T-cell (primary cell): ENCODE measurements at regions of chr19 and their contacts with region 1.

Region 1: DNA sequence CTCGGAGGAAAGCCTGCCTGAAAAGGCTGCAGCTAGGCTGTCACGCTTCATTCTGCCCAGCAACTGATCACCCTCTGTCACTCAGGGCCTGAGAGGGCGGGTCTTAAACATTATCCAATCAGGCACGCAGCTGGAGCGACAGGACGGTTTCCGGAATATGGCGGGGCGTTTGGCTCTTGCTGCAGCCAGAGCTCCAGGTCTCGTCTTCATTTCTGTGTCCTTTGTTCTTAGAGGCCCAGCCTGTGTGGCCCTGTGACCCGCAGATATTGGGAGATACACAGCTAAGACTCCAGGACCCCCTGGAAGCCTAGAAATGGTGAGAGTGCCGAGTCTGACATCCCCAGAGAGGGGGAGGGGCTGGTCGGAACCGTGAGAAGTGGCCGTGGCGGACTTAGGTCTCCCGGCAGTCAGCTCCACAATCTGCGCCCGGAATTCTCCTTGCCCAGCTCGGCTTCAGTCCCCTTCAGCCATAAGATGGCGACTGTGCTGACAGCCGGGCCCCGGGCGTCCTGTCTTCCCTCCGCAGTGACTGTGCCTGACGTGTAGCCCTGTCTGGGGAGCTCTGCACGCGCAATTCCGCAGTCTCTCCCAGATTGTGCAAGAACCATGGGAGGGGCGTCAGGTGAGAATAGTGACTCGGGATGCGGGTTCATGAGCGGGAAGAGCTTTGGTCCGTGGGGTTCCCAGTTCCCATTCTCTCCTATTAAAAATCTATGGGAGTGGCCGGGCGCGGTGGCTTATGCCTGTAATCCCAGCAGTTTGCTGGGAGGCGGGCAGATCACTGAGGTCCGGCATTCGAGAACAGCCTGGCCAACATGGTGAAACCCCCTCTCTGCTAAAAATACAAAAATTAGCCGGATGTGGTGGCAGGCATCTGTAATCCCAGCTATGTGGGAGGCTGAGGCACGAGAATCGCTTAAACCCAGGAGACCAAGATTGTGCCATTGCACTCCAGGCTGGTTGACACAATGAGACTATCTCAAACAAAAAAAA is at the start of gene ZNF429:
- DNase-seq: peak; percentile 82 to 95 (median 91)
- ATAC-seq: peak; percentile 99 to 100 (median 100)
- H3K4me3 ChIP-seq: peak within 1 kb of the TSS; percentile 78 to 100
- H3K4me3 Mint-ChIP-seq: peak within 1 kb of the TSS; percentile 100
- H3K27ac ChIP-seq: peak within 1 kb of the TSS; percentile 90
- H3K27ac Mint-ChIP-seq: peak within 1 kb of the TSS; percentile 99
- H3K4me1 ChIP-seq: peaks cover 9 to 32% of the 10 kb centered on the region in 2 experiments
- H3K4me1 Mint-ChIP-seq: peaks cover 44 to 49% (median 48%) of the 10 kb centered on the region in 3 donors
- H3K27me3 ChIP-seq: no peaks in the 10 kb centered on the region
- H3K27me3 Mint-ChIP-seq: no peaks in the 10 kb centered on the region
- total RNA-seq, gene ZNF429: 14.6 to 26.8 (median 24.3) TPM

Region 2: GRCh38 chr19:19531951-19532805 is 1973.6 kb before region 1 on chr19:
- CTCF ChIA-PET with region 1: no interaction called
- POLR2A ChIA-PET with region 1: interaction called in 1 of 2 experiments, 11 read pairs
- DNase-seq: peak; percentile 52 to 92 (median 81)
- ATAC-seq: peak; percentile 83 to 87 (median 86)
- H3K4me3 ChIP-seq: no peak overlapping the region
- H3K4me3 Mint-ChIP-seq: no peak overlapping the region
- H3K27ac ChIP-seq: no peak overlapping the region
- H3K27ac Mint-ChIP-seq: peak overlapping the region; percentile 71 to 84
- H3K4me1 ChIP-seq: peaks cover 0 to 15% of the 10 kb centered on the region in 2 experiments
- H3K4me1 Mint-ChIP-seq: peaks cover 9 to 25% (median 12%) of the 10 kb centered on the region in 3 donors
- H3K27me3 ChIP-seq: no peaks in the 10 kb centered on the region
- H3K27me3 Mint-ChIP-seq: peaks cover 0 to 2% of the 10 kb centered on the region in 2 donors

Region 3: GRCh38 chr19:21474671-21475181 is 31.0 kb before region 1 on chr19:
- CTCF ChIA-PET with region 1: no interaction called
- POLR2A ChIA-PET with region 1: interaction called in 1 of 2 experiments, 13 read pairs
- DNase-seq: peak; percentile 16 to 85 (median 61)
- ATAC-seq: peak; percentile 93 to 100 (median 96)
- H3K4me3 ChIP-seq: peak overlapping the region; percentile 8 to 76
- H3K4me3 Mint-ChIP-seq: peak overlapping the region; percentile 34 to 73 (median 62)
- H3K27ac ChIP-seq: no peak overlapping the region
- H3K27ac Mint-ChIP-seq: no peak overlapping the region
- H3K4me1 ChIP-seq: peaks cover 0 to 14% of the 10 kb centered on the region in 2 experiments
- H3K4me1 Mint-ChIP-seq: peaks cover 0 to 5% (median 5%) of the 10 kb centered on the region in 3 donors
- H3K27me3 ChIP-seq: peaks cover 0 to 19% of the 10 kb centered on the region in 2 experiments
- H3K27me3 Mint-ChIP-seq: peaks cover 0 to 11% of the 10 kb centered on the region in 2 donors

Region 4: GRCh38 chr19:21482863-21483276 is 22.9 kb before region 1 on chr19:
- CTCF ChIA-PET with region 1: interaction called, 3 to 20 read pairs
- POLR2A ChIA-PET with region 1: interaction called in 1 of 2 experiments, 5 read pairs
- DNase-seq: peak; percentile 26 to 85 (median 55)
- ATAC-seq: peak; percentile 74 to 85 (median 83)
- H3K4me3 ChIP-seq: no peak overlapping the region
- H3K4me3 Mint-ChIP-seq: no peak overlapping the region
- H3K27ac ChIP-seq: no peak overlapping the region
- H3K27ac Mint-ChIP-seq: no peak overlapping the region
- H3K4me1 ChIP-seq: peaks cover 0 to 7% of the 10 kb centered on the region in 2 experiments
- H3K4me1 Mint-ChIP-seq: peaks cover 0 to 1% (median 0%) of the 10 kb centered on the region in 3 donors
- H3K27me3 ChIP-seq: no peaks in the 10 kb centered on the region
- H3K27me3 Mint-ChIP-seq: no peaks in the 10 kb centered on the region

Region 5: DNA sequence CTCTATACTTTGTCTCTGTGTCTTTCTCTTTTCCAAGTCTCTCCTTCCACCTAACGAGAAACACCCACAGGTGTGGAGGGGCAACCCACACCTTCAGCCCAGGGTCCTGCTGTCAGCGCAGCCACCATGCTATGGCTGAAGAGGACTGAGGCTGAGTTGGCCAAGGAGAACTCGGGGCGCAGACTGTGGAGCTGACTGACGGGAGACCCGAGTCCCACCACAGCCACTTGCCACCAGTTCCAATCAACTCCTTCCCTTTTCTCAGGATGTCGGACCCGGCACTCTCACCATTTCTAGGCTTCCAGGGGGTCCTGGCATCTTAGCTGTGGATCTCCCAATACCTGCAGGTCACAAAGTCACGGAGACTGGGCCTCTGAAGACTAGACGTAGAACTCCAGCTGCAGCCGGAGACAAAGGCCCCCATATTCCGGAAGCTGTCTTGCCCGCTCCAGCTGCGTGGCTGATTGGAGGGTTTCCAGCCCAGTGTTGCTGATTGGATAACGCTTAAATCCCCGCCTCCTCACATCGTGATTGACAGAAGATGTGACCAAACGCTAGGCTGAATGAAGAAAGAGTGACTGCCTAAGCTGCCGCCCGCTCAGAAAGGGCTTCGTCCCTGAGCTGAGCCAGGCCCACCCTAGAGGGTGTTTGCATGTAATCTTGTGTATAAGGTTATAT is 63.2 kb after region 1 on chr19:
- CTCF ChIA-PET with region 1: interaction called in 1 of 2 experiments, 19 read pairs
- POLR2A ChIA-PET with region 1: interaction called in 1 of 2 experiments, 22 read pairs
- DNase-seq: peak; percentile 35 to 96 (median 80)
- ATAC-seq: peak; percentile 97 to 99 (median 98)
- H3K4me3 ChIP-seq: peak overlapping the region; percentile 18 to 90
- H3K4me3 Mint-ChIP-seq: peak overlapping the region; percentile 94 to 95 (median 94)
- H3K27ac ChIP-seq: no peak overlapping the region
- H3K27ac Mint-ChIP-seq: peak overlapping the region; percentile 96
- H3K4me1 ChIP-seq: peaks cover 7 to 17% of the 10 kb centered on the region in 2 experiments
- H3K4me1 Mint-ChIP-seq: peaks cover 16 to 18% (median 18%) of the 10 kb centered on the region in 3 donors
- H3K27me3 ChIP-seq: peaks cover 0 to 4% of the 10 kb centered on the region in 2 experiments
- H3K27me3 Mint-ChIP-seq: no peaks in the 10 kb centered on the region

Region 6: GRCh38 chr19:21584537-21584936 is 78.8 kb after region 1 on chr19:
- CTCF ChIA-PET with region 1: interaction called, 4 to 12 read pairs
- POLR2A ChIA-PET with region 1: interaction called in 1 of 2 experiments, 3 read pairs
- DNase-seq: peak in 1 of 35 experiments; percentile 39
- ATAC-seq: peak in 2 of 4 experiments; percentile 13 to 27
- H3K4me3 ChIP-seq: no peak overlapping the region
- H3K4me3 Mint-ChIP-seq: peak overlapping the region in 1 of 3 donors; percentile 89
- H3K27ac ChIP-seq: no peak overlapping the region
- H3K27ac Mint-ChIP-seq: peak overlapping the region; percentile 17 to 73
- H3K4me1 ChIP-seq: peaks cover 16 to 56% of the 10 kb centered on the region in 2 experiments
- H3K4me1 Mint-ChIP-seq: peaks cover 21 to 51% (median 27%) of the 10 kb centered on the region in 3 donors
- H3K27me3 ChIP-seq: peaks cover 0 to 29% of the 10 kb centered on the region in 2 experiments
- H3K27me3 Mint-ChIP-seq: peaks cover 0 to 20% of the 10 kb centered on the region in 2 donors